ENCODE measurements at regions of chr7 and their contacts with region 1.

Region 1: GRCh38 chr7:80392229-80393169 is 119.4 kb downstream of the GNAT3 start:
- DNase-seq: peak in 1 of 10 donors; percentile 18

Region 2: DNA sequence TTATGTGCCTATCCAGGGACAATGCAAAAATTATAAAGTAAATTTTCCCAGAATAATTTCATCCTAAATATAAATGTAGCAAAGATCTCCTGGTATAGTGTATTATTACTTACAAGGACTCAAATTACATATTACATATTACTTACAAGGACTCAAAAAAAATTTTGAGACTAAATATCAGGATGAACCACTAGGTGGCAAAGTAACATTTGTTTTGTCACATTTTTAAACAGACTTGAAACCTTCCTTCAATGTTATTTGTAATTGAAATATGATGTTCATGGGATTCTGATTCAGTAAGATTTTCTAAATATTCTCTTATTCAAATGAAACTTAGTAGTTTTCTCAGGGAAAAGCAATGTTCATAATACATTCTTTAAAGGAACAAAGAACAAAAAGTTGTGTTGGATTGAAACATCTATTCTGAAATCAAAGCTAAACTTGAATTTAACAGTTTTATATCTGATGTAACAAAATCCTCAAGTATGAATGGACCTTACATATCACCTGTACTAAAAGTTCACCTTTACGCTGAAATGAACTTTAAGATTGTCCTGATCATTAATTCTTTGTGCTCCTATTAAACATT is 332.2 kb before region 1 on chr7:
- intact Hi-C with region 1: loop called (anchors 1 kb)
- DNase-seq: no peak

Region 3: GRCh38 chr7:80134536-80135320 is 257.8 kb before region 1 on chr7 and contains the start of gene GNAI1:
- intact Hi-C with region 1: loop called (anchors 10 kb)
- DNase-seq: peak; percentile 49 to 95 (median 64)

Region 4: GRCh38 chr7:80288175-80289122 is 104.0 kb before region 1 on chr7:
- intact Hi-C with region 1: no loop called
- DNase-seq: peak in 5 of 10 donors; percentile 28 to 85 (median 49)

Region 5: DNA sequence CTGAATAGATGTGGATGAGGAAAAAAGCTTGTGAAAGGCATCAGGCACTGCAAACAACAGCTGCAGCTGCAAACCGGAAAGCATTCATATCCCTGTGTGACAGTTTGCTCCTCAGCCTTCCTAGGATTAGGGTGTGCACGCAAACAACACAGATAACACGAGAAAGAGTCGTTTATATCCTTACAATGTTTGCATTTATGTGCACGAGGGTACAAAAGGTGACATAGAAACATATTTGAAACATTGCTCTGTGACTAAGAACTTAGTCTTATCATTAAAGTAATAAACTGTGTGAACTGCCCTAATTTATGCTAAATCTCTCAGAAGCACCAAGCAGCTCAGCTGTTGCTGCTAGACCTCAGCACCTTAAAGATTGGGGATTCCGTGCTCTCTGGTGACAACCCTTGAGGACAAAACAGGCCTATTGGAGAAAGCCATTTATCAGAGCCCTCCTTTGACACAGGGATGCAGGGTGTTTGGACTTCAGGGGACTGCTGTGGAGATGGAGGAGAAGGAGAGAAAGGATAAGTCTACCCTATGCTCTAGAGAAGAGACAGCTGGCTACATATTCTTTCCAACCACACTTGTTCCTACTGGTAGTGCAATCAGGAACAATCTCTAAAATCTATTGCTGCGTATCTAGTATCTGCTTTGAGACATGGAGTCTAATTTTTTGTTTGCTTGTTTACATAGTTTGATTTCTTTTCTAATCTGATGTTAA is 56.8 kb before region 1 on chr7:
- intact Hi-C with region 1: loop called (anchors 10 kb)
- DNase-seq: peak in 1 of 10 donors; percentile 22

Region 6: DNA sequence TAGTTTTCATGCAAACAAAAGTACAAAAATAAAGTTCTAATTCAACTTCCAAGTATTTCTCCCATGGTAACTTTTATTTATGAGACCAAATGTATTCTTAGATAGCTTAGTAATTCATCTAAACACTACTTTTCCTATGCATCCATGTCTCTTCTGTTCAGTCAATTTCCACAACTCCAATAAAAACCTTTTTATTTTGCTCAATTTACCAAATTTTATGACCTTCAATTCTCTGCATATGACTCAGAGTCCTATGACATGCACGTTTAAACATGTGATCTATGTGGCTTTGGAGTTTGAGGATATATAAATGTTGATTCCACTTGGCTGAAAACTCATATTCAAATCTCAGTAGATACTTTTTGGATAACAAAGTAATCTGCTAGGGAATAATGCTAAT is 159.8 kb after region 1 on chr7:
- intact Hi-C with region 1: no loop called
- DNase-seq: no peak

Measured in posterior cingulate gyrus (tissue), 11 donors.